Gastrocnemius medialis (tissue), 4 donors: ENCODE measurements at regions of chr1 and their contacts with region 1.

Region 1: DNA sequence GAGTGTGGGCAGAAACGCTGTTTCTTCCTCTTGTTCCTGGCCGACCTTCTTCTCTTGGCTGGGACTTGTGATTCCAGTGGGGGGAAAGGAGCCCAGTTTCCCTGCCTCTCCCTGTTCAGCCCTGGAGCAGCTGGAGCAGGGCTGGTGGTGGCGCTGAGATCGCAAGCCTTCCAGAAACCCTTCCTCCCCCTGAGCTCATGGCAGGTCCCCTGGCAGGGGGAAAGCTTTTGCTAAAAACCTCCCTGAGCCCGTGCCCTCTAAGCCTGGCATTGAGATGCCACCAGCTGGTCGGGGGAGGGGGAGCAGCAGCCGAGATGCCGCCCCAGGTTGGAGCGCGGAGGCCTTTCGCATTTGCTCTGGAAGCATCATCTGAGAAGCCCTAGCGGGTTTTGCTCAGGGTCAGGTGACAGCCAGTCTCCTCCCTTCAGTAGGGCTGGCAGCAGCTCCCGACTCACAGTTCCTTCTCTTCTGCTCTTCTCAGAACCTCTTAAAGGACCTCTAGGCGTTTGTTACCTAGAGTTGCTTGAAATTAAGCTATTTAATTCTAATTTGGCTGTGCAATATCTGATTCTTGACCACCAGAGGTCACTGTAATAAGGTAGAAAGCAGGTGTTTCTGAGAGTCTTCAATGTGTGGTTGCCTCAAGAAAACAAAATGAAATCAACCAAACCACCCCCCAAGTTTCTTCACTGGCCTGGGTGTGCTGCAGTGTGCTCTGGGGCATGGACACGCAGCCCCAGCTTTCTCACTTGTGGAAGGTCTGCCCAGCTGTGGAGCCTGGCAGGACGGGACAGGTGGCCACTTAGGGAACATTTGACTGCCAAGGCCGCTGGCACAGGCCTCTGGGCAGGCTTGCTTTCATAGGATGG is 257.3 kb downstream of the CAMTA1 start:
- DNase-seq: peak in 1 of 2 donors; percentile 44
- ATAC-seq: peak; percentile 74 to 84
- H3K4me3 ChIP-seq: peak overlapping the region in 2 of 4 donors; percentile 28 to 29
- H3K27ac ChIP-seq: peak overlapping the region in 2 of 4 donors; percentile 10 to 76
- H3K4me1 ChIP-seq: peaks cover 7 to 18% of the 10 kb centered on the region in 2 donors
- H3K27me3 ChIP-seq: no peaks in the 10 kb centered on the region
- CTCF ChIP-seq: peak in 4 of 5 experiments; percentile 46 to 54 (median 50)
- POLR2A ChIP-seq: no peak

Region 2: GRCh38 chr1:7218210-7218832 is 175.8 kb after region 1 on chr1:
- in situ Hi-C with region 1: no loop called
- intact Hi-C with region 1: loop called (anchors 5 kb)
- DNase-seq: no peak
- ATAC-seq: peak in 1 of 2 donors; percentile 45
- H3K4me3 ChIP-seq: no peak overlapping the region
- H3K27ac ChIP-seq: no peak overlapping the region
- H3K4me1 ChIP-seq: no peaks in the 10 kb centered on the region
- H3K27me3 ChIP-seq: no peaks in the 10 kb centered on the region
- CTCF ChIP-seq: peak; percentile 62 to 78 (median 71)
- POLR2A ChIP-seq: no peak